ENCODE measurements at regions of chr1 and their contacts with region 1.

Region 1: GRCh38 chr1:167553136-167554027 is at the start of gene CREG1:
- DNase-seq: peak; percentile 87 to 94
- H3K4me3 ChIP-seq: peak within 1 kb of the TSS; percentile 76
- H3K27ac ChIP-seq: no peak within 1 kb of the TSS
- H3K4me1 ChIP-seq: peaks cover 24% of the 10 kb centered on the region
- H3K27me3 ChIP-seq: no peaks in the 10 kb centered on the region
- CTCF ChIP-seq: no peak
- total RNA-seq, gene CREG1: 31.6 and 34.6 TPM in 2 replicates

Region 2: DNA sequence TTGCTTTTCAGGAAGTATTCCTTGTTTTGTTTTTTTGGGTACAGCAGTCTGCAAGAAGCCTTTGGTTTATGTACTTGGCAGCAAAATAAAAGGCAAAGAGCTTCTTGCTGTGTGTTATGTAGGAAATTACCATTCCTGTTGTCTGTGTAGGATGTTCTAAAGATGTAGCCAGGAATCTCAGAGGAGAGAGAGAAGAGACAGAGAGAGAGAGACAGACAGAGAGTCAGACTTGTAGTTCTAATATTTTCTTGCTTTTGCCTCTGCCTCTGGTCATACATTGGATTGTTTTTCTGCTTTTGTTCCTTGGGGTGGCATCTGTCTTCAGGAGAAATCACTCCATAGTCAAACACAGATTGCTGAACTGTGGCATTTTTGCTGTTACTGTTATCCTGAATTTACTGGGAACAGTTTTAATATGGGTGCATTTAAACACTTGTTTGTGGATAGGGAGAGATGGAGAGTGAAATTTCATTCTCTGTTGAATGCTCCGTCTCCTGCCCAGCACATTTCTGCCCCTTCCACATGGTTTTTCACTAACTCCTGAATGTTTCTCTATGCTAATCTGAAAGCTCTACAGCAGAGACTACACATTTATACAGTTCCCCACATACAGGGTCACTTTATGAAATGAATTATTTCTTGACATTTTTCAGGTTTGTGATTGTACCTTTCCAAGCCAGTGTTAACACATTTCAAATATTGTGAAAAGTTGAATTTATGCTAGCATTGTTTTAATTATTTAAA is 282.9 kb before region 1 on chr1:
- CTCF ChIA-PET with region 1: no interaction called
- POLR2A ChIA-PET with region 1: no interaction called
- intact Hi-C with region 1: loop called (anchors 5 kb)
- DNase-seq: no peak
- H3K4me3 ChIP-seq: no peak overlapping the region
- H3K27ac ChIP-seq: no peak overlapping the region
- H3K4me1 ChIP-seq: no peaks in the 10 kb centered on the region
- H3K27me3 ChIP-seq: no peaks in the 10 kb centered on the region
- CTCF ChIP-seq: no peak

Region 3: GRCh38 chr1:167401260-167401873 is 152.0 kb before region 1 on chr1:
- CTCF ChIA-PET with region 1: no interaction called
- POLR2A ChIA-PET with region 1: no interaction called
- intact Hi-C with region 1: loop called (anchors 1 kb)
- DNase-seq: peak; percentile 44 to 54
- H3K4me3 ChIP-seq: no peak overlapping the region
- H3K27ac ChIP-seq: no peak overlapping the region
- H3K4me1 ChIP-seq: peaks cover 12% of the 10 kb centered on the region
- H3K27me3 ChIP-seq: no peaks in the 10 kb centered on the region
- CTCF ChIP-seq: peak; percentile 78

Region 4: DNA sequence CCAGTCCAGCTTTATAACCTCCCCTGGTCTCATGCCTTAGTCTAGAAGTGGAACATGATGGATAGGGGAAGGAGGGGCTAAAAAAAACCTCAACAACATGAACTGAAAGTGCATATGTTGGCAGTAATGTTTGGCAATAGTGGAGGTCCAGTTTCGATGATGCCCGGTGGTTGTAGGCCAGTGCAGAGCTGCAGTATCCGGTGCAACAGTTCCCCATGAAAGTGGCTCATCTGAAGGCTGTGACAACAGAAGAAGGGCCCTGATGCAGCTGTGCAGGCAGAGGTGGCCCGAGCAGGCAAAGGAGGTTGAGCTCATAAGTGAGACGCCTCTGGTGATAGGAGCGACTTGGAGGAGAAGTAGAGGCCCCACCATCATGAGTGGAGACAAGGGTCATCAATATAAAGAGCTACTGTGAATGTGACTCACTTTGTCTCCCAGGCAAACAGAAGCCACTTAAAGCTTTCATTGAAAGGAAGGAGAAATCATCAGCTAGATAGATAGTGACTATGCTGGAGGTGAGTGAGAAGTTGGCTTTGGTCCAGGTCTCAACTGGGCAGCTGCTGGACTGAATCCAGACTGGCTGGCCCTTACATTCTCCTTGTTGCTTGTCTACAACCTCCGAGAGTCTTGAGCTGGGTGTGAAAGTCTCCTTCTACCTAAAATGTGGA is 10.3 kb after region 1 on chr1:
- CTCF ChIA-PET with region 1: interaction called, 10 read pairs
- POLR2A ChIA-PET with region 1: interaction called, 10 read pairs
- intact Hi-C with region 1: no loop called
- DNase-seq: peak in 1 of 2 experiments; percentile 37
- H3K4me3 ChIP-seq: no peak overlapping the region
- H3K27ac ChIP-seq: peak overlapping the region; percentile 95
- H3K4me1 ChIP-seq: peaks cover 28% of the 10 kb centered on the region
- H3K27me3 ChIP-seq: no peaks in the 10 kb centered on the region
- CTCF ChIP-seq: no peak

Region 5: GRCh38 chr1:167599957-167600581 is 46.7 kb after region 1 on chr1:
- CTCF ChIA-PET with region 1: no interaction called
- POLR2A ChIA-PET with region 1: no interaction called
- intact Hi-C with region 1: loop called (anchors 2 kb)
- DNase-seq: peak; percentile 23 to 64
- H3K4me3 ChIP-seq: no peak overlapping the region
- H3K27ac ChIP-seq: no peak overlapping the region
- H3K4me1 ChIP-seq: peaks cover 28% of the 10 kb centered on the region
- H3K27me3 ChIP-seq: peaks cover 7% of the 10 kb centered on the region; the same call in 1 of the 2 replicates
- CTCF ChIP-seq: peak; percentile 33; the same call in 1 of the 2 replicates

Region 6: GRCh38 chr1:167641786-167642500 is 88.6 kb after region 1 on chr1:
- CTCF ChIA-PET with region 1: no interaction called
- POLR2A ChIA-PET with region 1: no interaction called
- intact Hi-C with region 1: no loop called
- DNase-seq: no peak
- H3K4me3 ChIP-seq: no peak overlapping the region
- H3K27ac ChIP-seq: no peak overlapping the region
- H3K4me1 ChIP-seq: no peaks in the 10 kb centered on the region
- H3K27me3 ChIP-seq: peaks cover 47% of the 10 kb centered on the region
- CTCF ChIP-seq: no peak

Region 7: DNA sequence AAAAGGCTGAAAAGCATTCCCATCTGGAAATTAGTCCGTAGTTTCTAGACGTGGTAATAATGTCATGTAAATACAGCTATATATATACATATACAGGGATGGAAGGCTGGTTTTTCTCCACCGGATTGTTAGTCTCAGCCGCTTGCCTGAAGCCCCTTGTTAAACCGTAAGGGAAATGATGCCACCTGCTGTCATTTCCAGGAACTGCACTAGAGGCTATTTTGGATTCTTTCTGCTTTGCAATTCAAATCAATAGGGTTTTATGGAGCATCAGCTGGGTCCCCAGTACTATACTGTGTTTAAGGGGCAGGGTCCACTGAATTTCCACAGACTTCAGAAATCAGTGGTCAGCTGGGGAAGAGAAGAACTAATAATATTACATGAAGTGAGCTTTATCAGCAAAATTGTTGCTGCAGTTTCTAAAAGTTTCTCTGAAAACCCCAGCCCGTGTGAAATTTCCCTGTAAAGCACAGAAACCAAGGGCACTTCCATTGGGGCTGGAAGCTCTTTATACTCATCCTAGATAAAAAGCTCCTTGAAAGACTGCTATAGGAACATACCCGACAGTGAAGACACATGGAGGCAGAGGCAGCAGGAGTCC is 134.6 kb after region 1 on chr1:
- CTCF ChIA-PET with region 1: interaction called, 3 read pairs
- POLR2A ChIA-PET with region 1: no interaction called
- intact Hi-C with region 1: loop called (anchors 1 kb)
- DNase-seq: peak; percentile 63
- H3K4me3 ChIP-seq: no peak overlapping the region
- H3K27ac ChIP-seq: no peak overlapping the region
- H3K4me1 ChIP-seq: peaks cover 13% of the 10 kb centered on the region
- H3K27me3 ChIP-seq: no peaks in the 10 kb centered on the region
- CTCF ChIP-seq: peak; percentile 95

Region 8: DNA sequence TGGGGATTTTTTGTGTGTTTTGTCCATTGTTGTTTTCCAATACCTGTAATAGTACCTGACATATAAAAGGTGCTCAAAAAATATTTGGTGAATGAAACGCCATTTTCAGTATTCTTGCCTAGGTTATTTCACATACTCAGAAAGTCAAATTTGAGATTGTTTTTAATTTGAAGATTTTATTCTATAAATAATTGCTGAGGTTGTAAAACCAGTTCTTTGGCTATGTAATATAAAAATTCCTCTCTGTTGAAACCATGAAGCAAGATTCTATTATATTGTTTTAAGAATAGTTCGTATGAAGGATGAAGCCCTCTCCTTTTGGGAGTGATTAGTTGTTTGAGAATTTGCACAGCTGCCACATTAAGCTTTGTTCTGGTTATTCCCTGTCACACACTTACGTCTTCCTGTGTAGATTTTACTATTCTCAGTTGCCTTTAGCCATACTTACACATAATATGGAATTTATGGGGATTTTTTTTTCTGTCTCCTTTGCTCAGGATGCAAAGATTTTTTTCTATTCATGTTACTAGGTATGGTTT is 443.7 kb after region 1 on chr1:
- CTCF ChIA-PET with region 1: no interaction called
- POLR2A ChIA-PET with region 1: interaction called, 12 read pairs
- intact Hi-C with region 1: no loop called
- DNase-seq: no peak
- H3K4me3 ChIP-seq: no peak overlapping the region
- H3K27ac ChIP-seq: no peak overlapping the region
- H3K4me1 ChIP-seq: no peaks in the 10 kb centered on the region
- H3K27me3 ChIP-seq: no peaks in the 10 kb centered on the region
- CTCF ChIP-seq: no peak

Region 9: DNA sequence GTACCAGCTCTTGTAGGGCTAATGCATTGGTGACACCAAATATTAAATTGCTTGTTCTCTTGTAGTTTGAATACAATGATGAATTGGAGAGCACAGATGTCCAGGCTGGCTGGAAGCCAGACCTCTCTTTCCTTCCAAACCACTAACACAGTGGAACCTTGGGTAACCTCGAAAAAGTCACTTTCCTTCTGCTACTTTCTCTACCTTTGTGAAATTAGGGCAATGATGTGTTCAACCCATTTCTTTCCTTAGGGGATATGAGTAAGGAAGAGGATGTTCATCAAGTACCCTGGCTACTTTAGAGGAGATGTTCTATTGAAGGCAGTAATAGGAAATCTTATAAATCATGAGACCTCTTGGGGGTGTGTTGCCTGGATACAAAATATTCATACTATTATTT is 934.8 kb after region 1 on chr1:
- CTCF ChIA-PET with region 1: no interaction called
- POLR2A ChIA-PET with region 1: no interaction called
- intact Hi-C with region 1: no loop called
- DNase-seq: no peak
- H3K4me3 ChIP-seq: no peak overlapping the region
- H3K27ac ChIP-seq: no peak overlapping the region
- H3K4me1 ChIP-seq: peaks cover 12% of the 10 kb centered on the region
- H3K27me3 ChIP-seq: no peaks in the 10 kb centered on the region
- CTCF ChIP-seq: no peak

Measured in PC-9 (cell line).